ENCODE measurements at regions of chr14 and their contacts with region 1.

Region 1: DNA sequence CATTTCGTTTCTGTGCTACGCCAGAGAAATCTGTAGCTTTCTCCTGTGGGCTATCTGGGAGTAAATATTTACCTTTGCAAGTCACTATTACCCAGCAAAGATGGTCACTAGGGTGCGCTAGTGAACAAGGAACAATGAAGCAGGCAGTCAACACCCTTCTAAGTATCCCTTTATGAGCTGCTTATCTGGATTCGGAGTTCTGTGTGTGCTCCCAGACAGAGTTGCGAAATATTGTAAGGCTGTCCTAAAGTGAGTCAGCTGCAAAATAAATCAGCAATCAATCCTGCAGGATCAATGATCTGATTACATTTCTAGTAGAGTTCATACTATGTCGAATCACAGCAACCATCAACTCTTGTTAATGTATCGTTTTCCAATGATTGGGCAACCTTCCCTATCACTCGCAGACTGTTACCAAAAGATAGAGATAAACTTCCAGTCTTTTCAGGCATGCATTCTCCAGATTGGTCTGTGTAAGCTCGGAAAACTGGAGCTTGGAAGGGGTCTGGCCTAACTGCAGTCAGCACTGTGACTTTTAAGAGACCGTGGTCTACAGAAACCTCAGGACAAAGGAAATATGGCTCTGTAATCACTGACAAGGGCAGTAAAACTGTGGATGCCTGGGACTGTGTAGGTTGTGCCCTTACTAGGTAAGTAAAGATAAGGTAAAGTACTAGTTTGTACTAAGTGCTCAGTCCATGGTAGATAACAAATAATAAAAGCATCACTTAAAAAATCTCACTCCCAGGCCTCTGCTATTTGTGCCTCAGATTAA is 133.5 kb downstream of the KCNK10 start:
- ATAC-seq: peak; percentile 96 to 99 (median 98)
- H3K4me3 ChIP-seq: no peak overlapping the region
- H3K27ac ChIP-seq: no peak overlapping the region
- H3K4me1 ChIP-seq: peaks cover 0 to 10% of the 10 kb centered on the region in 2 donors

Region 2: GRCh38 chr14:87873741-87874140 is 315.9 kb before region 1 on chr14:
- in situ Hi-C with region 1: no loop called
- ATAC-seq: peak in 5 of 8 experiments; percentile 39 to 77 (median 58)
- H3K4me3 ChIP-seq: no peak overlapping the region
- H3K27ac ChIP-seq: no peak overlapping the region
- H3K4me1 ChIP-seq: no peaks in the 10 kb centered on the region

Region 3: DNA sequence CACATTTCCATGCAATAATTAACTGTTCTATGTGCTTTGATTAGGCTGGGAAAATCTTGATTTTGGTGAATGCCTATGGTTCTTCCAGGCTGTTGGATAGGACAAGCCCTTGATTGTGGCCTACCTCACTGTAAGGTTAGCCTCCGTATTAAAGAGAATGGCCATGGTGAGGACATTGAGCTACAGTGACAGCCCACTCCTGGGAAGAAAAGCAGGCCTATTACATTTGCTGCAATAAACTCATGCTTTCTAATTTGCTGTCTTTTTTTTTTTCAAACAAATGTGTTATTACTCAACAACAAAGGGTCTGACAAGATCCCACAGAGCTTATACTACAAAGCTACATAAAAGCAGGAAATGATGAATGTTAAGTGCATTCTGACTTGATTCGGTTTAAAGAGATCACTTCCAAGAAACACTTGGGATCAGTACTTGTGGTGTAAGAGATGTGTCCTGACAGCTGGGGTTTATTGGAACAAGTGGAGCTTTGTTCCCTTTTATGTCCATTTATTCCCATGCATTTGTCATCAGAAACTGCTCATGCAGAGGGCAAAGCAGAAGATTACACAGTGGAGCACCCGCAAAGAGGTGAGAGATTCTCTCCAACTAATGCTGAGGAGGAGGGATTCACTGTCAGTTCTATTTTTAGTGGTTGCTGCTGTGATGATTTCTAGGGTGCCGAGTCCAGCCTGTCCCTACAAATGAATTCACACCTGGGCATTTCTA is 162.5 kb after region 1 on chr14:
- in situ Hi-C with region 1: loop called in 1 of 9 experiments (anchors 25 kb)
- ATAC-seq: peak in 5 of 8 experiments; percentile 69 to 85 (median 74)
- H3K4me3 ChIP-seq: no peak overlapping the region
- H3K27ac ChIP-seq: no peak overlapping the region
- H3K4me1 ChIP-seq: peaks cover 5 to 11% of the 10 kb centered on the region in 2 donors

Region 4: DNA sequence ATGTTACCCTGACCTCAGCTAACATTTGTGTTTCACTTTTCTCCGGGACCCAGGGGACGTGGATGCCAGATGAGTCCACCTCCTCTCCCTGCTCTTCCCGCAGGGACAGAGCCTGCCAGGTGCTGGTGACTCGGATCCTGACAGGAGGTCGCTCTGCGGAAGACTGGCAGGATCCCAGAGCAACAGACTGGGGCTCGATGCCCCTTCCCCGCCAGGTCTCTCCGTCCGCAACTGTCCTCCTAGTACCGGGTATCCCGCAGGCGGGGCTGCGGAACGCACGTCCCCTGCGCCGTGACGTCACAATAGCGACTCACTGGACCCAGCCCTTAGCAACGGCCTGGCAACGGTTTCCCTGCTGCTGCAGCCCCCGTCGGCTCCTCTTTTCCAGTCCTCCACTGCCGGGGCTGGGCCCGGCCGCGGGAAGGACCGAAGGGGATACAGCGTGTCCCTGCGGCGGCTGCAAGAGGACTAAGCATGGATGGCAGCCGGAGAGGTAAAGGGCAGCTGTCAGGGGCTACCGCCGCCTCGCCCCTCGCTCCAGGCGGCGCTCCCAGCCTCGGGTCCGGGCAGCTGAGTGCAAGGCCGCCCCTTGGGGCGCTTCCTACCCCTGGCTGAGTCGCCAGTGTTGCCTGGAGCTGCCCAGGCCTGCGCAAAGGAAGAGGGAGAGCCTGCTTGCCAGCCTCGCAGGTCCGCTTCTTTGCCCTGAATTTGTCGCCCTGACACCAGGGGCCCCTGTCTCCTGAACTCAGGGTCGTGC is 195.9 kb after region 1 on chr14 and contains the start of gene SPATA7:
- in situ Hi-C with region 1: loop called in 1 of 9 experiments (anchors 25 kb)
- ATAC-seq: peak; percentile 96 to 99 (median 98)
- H3K4me3 ChIP-seq: peak within 1 kb of the TSS; percentile 55 to 91 (median 73)
- H3K27ac ChIP-seq: peak within 1 kb of the TSS; percentile 70 to 79
- H3K4me1 ChIP-seq: peaks cover 6% of the 10 kb centered on the region in 2 donors
- total RNA-seq, gene SPATA7: 4.4 to 37.8 (median 24.9) TPM

Measured in motor neuron (in vitro differentiated cells).